Psoas muscle (tissue), 8 donors: ENCODE measurements at regions of chr3 and their contacts with region 1.

Region 1: DNA sequence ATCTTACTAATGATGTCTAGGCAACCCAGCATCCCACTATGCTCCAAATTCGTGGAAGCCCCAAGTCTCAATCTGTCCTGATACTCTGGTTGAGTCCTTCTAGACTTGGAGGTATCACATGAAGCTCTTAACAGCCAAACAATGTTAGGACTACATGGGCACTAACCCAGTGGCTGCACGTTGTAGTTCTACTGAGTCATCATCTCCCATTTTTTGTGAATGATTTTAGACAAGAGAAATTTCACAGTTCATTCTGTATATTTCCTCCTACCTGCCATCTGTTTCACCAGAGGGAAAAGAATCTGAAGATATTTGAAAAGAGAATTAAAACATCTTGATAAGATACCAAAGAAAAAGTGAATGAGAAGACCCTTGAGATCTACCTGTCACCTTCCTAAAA is 9.8 kb upstream of the WWTR1 start:
- DNase-seq: no peak
- ATAC-seq: no peak
- H3K4me3 ChIP-seq: no peak overlapping the region
- H3K27ac ChIP-seq: no peak overlapping the region
- H3K4me1 ChIP-seq: no peaks in the 10 kb centered on the region
- H3K27me3 ChIP-seq: no peaks in the 10 kb centered on the region
- CTCF ChIP-seq: no peak

Region 2: GRCh38 chr3:149702691-149703441 is 35.3 kb after region 1 on chr3:
- intact Hi-C with region 1: loop called in 1 of 2 experiments (anchors 5 kb)
- DNase-seq: no peak
- ATAC-seq: peak in 2 of 4 donors; percentile 46 to 49
- H3K4me3 ChIP-seq: no peak overlapping the region
- H3K27ac ChIP-seq: no peak overlapping the region
- H3K4me1 ChIP-seq: no peaks in the 10 kb centered on the region
- H3K27me3 ChIP-seq: no peaks in the 10 kb centered on the region
- CTCF ChIP-seq: no peak

Region 3: DNA sequence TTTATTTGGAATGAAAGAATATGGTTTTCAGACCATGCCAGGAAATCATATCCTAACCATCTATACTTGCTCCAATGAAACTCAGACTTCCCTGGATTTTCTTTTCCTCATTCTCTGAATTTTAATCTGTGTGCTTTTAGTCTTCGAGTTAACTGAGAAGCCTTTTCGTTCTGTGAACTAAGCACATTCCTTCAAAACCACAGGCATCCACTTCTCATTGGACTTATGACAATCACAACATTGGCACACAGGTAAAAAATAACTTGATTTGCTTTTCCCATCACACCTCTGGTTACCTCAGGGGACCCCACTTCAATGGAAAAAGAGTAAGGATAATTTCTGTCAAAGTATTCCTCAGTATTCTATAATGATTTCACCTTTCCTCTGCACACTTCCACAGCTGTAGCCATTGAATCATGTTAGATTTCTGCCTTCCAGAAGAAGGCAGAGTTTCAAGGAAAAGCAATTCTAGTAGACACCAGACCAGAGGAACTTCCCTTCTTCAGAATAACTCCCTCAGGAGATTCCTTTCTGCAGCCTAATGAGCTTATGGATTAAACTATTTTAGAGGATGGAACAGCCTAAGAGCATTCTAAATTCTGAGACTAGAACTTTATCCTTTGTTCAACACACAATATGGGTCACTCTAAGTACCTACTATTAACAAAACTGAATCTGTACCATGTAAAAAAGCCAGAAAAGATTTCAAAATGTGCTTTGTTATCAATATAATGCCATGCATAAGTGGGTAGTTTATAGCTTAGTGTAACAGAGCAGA is 68.8 kb after region 1 on chr3:
- intact Hi-C with region 1: no loop called
- DNase-seq: no peak
- ATAC-seq: no peak
- H3K4me3 ChIP-seq: no peak overlapping the region
- H3K27ac ChIP-seq: no peak overlapping the region
- H3K4me1 ChIP-seq: no peaks in the 10 kb centered on the region
- H3K27me3 ChIP-seq: no peaks in the 10 kb centered on the region
- CTCF ChIP-seq: no peak